Motor neuron (in vitro differentiated cells): ENCODE measurements at regions of chr17 and their contacts with region 1.

Region 1: DNA sequence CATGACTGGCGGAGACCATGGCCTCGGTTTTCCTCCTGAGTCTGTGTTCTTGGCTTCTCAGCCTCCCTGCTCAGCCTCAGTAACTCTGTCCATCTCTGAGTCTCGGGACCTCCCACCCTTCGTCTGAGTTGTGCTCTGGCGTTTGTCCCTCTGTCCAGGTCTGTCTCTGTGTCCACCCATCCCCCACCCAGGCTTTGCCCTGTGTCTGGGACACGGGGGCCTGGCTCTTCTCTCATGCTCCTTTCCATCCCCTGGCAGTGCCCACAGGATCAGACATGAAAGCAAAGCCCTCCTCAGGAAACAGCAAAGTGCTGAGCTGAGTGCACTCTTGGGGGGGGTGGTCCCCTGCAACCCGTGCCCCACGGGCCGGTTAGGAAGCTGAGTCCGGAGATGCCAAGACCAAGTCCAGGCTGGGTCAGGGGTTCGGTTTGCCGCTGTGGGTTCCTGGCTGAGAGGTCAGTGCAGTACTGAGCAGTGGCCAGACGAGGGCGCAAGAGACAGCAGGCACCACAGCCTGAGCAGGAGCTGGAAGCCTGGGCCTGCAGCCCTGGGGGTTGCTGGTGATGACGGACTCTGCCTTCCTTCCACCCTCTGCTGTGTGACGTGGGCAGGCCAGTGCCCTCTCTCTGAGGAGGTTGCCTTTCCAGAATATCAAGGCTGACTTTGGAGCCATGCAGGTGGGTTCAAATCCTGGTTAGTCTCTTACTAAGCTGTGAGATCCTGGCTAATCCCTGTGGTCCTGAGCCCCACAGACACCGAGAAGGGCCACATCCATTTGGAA is 2.5 kb downstream of the P2RX1 start:
- ATAC-seq: peak; percentile 65 to 95 (median 84)
- H3K4me3 ChIP-seq: no peak overlapping the region
- H3K27ac ChIP-seq: no peak overlapping the region
- H3K4me1 ChIP-seq: peaks cover 8 to 16% of the 10 kb centered on the region in 2 donors

Region 2: DNA sequence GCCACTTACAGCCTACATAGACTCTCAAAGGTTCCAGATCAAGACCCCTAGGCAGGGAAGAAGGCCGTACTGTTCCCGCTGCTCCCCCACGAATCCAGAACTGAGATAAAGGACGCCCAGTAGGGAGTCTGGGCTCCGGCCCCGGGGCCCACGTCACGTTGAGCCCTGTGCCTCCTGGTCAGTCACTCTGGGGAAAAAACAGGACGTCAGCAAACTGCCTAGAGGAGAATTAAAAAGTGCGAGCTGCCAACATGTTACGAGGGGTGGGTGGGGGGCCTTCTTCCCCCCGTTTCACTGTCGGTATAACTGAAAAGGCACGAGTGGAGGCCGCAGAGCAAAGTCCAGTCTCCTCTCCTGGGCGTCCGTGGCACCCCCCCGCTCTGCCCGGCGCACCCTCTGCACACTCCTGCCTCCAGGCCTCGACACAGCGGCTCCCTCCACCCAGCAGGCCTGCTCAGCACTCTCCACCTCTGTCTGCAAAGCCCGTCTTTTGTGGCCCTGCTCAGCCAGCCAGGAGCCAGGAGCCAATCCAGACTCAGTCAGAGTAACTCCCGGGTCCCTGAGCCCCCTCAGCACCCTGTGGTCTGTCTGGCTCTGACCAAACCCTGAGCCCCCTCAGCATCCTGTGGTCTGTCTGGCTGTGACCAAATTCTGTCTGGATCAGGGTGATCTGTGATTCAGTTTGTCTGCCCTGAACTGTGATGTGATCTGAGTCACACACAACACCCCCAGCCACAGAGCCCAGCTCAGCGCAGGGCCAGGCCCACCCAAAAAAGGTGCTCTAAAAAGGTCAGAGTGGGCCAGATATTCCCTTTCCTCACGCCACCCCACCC is 118.9 kb before region 1 on chr17:
- in situ Hi-C with region 1: no loop called
- ATAC-seq: peak in 6 of 8 experiments; percentile 17 to 64 (median 40)
- H3K4me3 ChIP-seq: no peak overlapping the region
- H3K27ac ChIP-seq: no peak overlapping the region
- H3K4me1 ChIP-seq: peaks cover 4% of the 10 kb centered on the region in 2 donors

Region 3: DNA sequence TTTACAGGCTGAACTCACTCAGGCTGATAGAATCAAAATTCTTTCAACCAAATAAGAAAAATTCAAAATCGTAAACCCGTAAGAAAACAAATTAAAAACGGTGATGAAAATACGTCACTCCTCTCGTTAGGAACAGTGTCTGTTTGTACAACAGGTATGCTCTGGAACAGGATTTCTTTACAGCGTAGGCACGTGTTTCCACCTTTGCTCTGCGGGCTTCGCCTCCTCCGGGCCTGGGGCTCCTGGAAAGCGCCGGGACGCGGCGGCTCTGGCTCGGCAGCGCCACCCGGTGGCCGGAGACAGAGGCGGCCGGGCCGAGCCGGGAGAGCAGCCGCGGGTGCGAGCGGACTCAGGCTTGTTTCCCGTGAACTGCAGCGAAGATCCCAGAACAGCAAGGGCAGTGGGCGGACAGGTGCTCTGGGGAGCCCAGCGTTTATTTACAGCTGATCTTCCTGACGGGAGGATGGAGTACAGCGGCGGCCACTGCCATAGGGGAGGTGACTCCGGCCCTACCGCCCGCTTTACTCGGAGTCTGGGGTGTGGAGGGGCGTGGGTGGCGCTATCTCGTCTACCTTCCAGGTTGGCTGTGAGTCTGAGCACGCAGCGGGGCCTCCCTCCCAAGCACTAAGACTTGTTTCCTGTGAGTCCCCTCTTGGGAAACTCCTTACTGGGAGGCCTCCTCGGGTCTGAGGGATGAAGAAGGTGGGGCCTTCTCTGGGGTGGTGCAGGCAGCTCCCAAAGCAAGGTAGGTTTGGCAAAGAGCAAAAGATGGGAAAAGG is 91.0 kb after region 1 on chr17:
- in situ Hi-C with region 1: loop called in 1 of 9 experiments (anchors 10 kb)
- ATAC-seq: peak; percentile 69 to 90 (median 74)
- H3K4me3 ChIP-seq: no peak overlapping the region
- H3K27ac ChIP-seq: no peak overlapping the region
- H3K4me1 ChIP-seq: no peaks in the 10 kb centered on the region

Region 4: DNA sequence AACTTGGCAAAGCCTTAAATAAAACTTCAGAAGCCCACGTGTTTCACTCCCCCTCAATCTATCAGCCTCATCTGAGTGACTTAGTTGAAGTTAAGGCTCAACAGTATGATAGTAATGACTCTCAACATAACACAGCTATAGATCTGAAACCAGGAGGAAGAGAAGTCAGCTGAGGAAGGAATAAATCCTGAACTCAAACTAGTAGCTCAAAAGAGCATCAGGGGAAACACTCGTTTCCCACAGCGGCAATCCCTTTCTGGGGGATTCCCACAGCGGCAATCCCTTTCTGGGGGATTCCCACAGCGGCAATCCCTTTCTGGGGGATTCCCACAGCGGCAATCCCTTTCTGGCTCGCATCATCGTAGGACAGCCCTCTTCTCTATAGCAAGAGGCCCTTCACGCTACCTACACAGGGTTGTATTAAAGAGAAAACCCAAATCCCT is 172.3 kb after region 1 on chr17:
- in situ Hi-C with region 1: no loop called
- ATAC-seq: no peak
- H3K4me3 ChIP-seq: no peak overlapping the region
- H3K27ac ChIP-seq: no peak overlapping the region
- H3K4me1 ChIP-seq: no peaks in the 10 kb centered on the region